ENCODE measurements at regions of chr2 and their contacts with region 1.

Region 1: GRCh38 chr2:101770726-101771125 is 73.2 kb downstream of the MAP4K4 start:
- DNase-seq: peak; percentile 62
- ATAC-seq: peak; percentile 86
- H3K4me3 ChIP-seq: no peak overlapping the region
- H3K27ac ChIP-seq: no peak overlapping the region
- H3K4me1 ChIP-seq: peaks cover 3 to 26% of the 10 kb centered on the region in 2 experiments; a peak in 3 of 4 replicates
- H3K27me3 ChIP-seq: no peaks in the 10 kb centered on the region
- CTCF ChIP-seq: peak; percentile 55 to 76 (median 66)
- POLR2A ChIP-seq: no peak
- RAD21 ChIP-seq: peak; percentile 51

Region 2: DNA sequence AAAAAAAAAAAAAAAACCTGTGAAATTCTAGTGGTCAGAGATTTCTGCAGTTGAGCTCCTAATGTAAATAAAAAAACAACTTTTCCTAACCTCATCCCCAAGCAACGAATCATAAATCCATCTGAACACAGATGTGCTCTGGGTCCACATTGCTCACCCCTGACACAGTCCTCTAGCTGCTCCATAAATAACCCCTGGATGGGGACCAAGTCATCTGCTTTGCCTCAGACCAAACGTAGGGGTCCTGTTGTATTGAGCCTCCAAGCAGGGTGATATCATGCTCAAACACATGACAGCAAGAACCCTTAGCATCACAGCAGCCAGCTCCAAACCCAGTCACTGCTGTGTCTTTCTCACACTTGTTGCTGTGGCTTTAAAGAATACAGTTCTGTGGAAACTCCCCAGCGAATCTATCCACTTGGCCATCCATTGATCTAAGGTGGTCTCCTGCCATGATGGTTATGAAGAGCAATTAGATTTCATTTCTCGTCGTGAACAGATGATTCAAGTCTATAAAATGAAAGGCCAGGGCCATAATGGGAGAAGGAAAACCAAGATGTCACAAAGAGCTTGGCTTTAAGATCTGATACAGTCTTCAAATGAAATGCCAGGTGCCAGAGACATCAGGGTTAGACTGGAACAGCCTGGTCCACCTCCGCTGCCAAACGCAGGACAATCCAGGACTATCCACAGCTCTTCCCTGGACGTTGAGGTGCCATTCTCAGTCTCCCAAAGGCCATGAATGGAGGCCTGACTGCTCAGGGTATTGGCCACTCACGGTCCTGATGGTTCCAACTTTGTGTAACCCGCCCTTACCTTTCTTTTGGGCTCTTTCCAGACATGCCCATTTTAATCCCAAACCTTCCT is 658.6 kb before region 1 on chr2:
- CTCF ChIA-PET with region 1: no interaction called
- POLR2A ChIA-PET with region 1: no interaction called
- RAD21 ChIA-PET with region 1: no interaction called
- intact Hi-C with region 1: no loop called
- DNase-seq: no peak
- ATAC-seq: no peak
- H3K4me3 ChIP-seq: no peak overlapping the region
- H3K27ac ChIP-seq: peak overlapping the region; percentile 73
- H3K4me1 ChIP-seq: peaks cover 40 to 68% of the 10 kb centered on the region in 2 experiments
- H3K27me3 ChIP-seq: no peaks in the 10 kb centered on the region
- CTCF ChIP-seq: no peak
- POLR2A ChIP-seq: no peak
- RAD21 ChIP-seq: no peak

Region 3: GRCh38 chr2:101746388-101746723 is 24.4 kb before region 1 on chr2:
- CTCF ChIA-PET with region 1: interaction called, 10 read pairs
- POLR2A ChIA-PET with region 1: no interaction called
- RAD21 ChIA-PET with region 1: no interaction called
- intact Hi-C with region 1: no loop called
- DNase-seq: no peak
- ATAC-seq: no peak
- H3K4me3 ChIP-seq: no peak overlapping the region
- H3K27ac ChIP-seq: no peak overlapping the region
- H3K4me1 ChIP-seq: peaks cover 0 to 22% of the 10 kb centered on the region in 2 experiments; a peak in 2 of 4 replicates
- H3K27me3 ChIP-seq: no peaks in the 10 kb centered on the region
- CTCF ChIP-seq: no peak
- POLR2A ChIP-seq: no peak
- RAD21 ChIP-seq: no peak

Region 4: DNA sequence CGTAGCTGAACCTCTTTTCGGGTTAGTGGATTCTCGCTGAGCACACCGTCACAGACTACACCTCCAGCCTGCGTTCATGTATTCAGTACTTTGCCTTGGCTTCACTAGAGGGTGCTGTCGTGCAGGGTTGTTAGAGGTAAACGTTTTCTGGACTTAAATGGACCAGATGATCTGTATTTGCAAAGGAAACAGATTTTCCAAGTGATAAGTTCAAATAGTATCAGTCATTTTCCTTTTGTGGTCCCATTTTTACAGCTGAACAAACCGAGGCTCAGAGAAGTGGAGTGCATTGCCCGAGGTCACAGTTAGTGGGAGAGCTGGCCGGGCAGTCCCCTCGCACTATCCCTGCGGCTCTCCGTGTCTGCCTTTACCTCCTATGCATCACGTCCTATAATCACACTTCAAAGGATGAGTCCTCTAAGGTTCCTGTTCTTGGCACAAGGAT is 52.6 kb after region 1 on chr2:
- CTCF ChIA-PET with region 1: interaction called, 12 read pairs
- POLR2A ChIA-PET with region 1: no interaction called
- RAD21 ChIA-PET with region 1: no interaction called
- intact Hi-C with region 1: no loop called
- DNase-seq: peak; percentile 16
- ATAC-seq: peak; percentile 89
- H3K4me3 ChIP-seq: no peak overlapping the region
- H3K27ac ChIP-seq: no peak overlapping the region
- H3K4me1 ChIP-seq: peaks cover 0 to 23% of the 10 kb centered on the region in 2 experiments; a peak in 1 of 4 replicates
- H3K27me3 ChIP-seq: no peaks in the 10 kb centered on the region
- CTCF ChIP-seq: peak; percentile 25 to 69 (median 65); a peak in 5 of 6 replicates
- POLR2A ChIP-seq: no peak
- RAD21 ChIP-seq: peak; percentile 39

Measured in HCT116 (cell line).